ENCODE measurements at regions of chr5 and their contacts with region 1.

Region 1: GRCh38 chr5:82351754-82352145 is 73.6 kb upstream of the RPS23 start:
- DNase-seq: peak; percentile 52
- ATAC-seq: peak; percentile 93
- H3K4me3 ChIP-seq: no peak overlapping the region
- H3K27ac ChIP-seq: no peak overlapping the region
- H3K4me1 ChIP-seq: no peaks in the 10 kb centered on the region
- H3K27me3 ChIP-seq: no peaks in the 10 kb centered on the region
- CTCF ChIP-seq: peak; percentile 81

Region 2: DNA sequence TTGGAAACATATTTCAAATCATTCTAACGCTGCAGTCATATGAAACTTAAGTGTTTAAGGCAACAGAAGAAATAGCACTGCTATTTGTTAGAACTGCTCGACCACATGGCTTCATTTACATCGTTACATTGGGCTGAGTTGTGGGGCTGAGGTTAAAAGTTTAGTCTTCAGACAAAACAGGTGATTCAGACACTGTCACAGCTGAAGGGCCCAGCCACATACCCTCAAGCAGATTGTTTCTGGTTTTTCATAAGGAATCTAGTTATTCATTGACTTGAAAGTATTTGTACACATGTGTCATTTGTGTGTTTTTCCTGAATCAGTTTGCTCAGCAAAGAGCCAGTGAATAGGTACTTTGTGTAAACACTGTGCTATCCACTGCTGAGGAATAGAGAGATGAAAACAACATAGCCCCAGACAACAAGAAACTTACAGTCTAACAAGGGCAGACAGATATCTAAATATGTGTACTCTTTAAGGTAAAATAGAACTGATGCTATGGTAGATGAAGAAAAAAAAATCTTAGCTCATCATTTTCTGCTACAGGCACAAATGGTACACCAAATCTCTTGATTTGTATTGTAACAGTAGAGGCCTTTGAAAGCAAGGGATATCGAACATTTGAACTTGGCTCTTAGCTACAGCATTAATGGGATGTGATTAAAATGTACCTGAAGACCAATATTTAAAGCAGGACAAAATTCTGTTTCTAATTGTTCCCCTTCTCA is 284.0 kb after region 1 on chr5:
- CTCF ChIA-PET with region 1: no interaction called
- POLR2A ChIA-PET with region 1: no interaction called
- in situ Hi-C with region 1: no loop called
- intact Hi-C with region 1: loop called (anchors 10 kb)
- DNase-seq: peak; percentile 17
- ATAC-seq: no peak
- H3K4me3 ChIP-seq: no peak overlapping the region
- H3K27ac ChIP-seq: no peak overlapping the region
- H3K4me1 ChIP-seq: no peaks in the 10 kb centered on the region
- H3K27me3 ChIP-seq: no peaks in the 10 kb centered on the region
- CTCF ChIP-seq: no peak